Sciatic nerve (tissue), 2 donors: ENCODE measurements at regions of chr3 and their contacts with region 1.

Region 1: DNA sequence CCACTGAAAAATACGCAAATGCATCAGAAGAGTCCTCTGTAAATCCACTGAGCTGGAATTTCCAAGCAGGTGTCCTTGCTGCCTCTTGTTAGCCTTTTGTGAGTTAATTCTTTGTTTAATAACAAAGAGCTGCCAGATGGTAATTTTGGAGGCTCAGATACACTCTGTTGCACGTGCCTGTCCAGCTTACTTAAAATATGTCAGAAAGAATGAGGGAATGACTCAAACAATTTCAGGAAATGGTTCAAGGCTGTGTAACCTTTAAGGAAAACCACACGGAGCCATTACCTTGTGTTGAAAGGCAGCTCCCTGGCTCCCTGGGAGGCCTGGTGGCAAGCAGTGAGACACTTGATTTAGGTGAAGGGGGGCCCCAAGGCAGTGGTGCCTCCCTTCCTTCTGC is 302.2 kb upstream of the CTDSPL start:
- DNase-seq: no peak
- ATAC-seq: no peak

Region 2: DNA sequence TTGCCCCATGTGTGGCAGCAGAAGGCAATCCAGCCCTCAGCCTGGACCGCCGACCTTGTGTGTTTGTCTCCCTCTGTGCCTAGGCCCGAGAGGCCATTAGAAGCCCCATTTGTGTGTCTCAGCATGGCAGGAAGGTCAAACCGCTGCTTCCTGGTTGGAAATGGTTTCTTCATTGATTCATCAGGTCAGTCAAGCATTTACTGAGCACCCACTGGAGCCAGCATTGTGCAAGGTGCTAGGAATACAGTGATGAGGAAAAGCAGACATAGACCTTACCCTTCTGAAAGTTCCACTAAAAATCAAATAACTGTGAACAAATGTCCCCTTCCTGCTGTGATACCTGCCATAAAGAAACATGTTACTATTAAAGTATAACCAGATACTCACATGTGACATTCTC is 36.3 kb after region 1 on chr3:
- intact Hi-C with region 1: loop called (anchors 1 kb)
- DNase-seq: no peak
- ATAC-seq: no peak